PC-3 (cell line): ENCODE measurements at regions of chr14 and their contacts with region 1.

Region 1: GRCh38 chr14:88792572-88793258 is at the start of gene EML5:
- DNase-seq: peak; percentile 81
- ATAC-seq: peak; percentile 86
- H3K4me3 ChIP-seq: peak within 1 kb of the TSS; percentile 86
- H3K27ac ChIP-seq: no peak within 1 kb of the TSS
- H3K4me1 ChIP-seq: peaks cover 8% of the 10 kb centered on the region; the same call in 1 of the 2 replicates
- H3K27me3 ChIP-seq: 0 out of 2 replicates have a peak, but pooled peaks cover 4% of the 10 kb centered on the region
- CTCF ChIP-seq: no peak
- total RNA-seq, gene EML5: 0.66 and 0.86 TPM in 2 replicates

Region 2: GRCh38 chr14:88698661-88699060 is 94.1 kb before region 1 on chr14:
- CTCF ChIA-PET with region 1: no interaction called
- POLR2A ChIA-PET with region 1: interaction called, 27 read pairs
- intact Hi-C with region 1: no loop called
- DNase-seq: peak; percentile 94
- ATAC-seq: peak; percentile 94
- H3K4me3 ChIP-seq: no peak overlapping the region
- H3K27ac ChIP-seq: peak overlapping the region; percentile 77
- H3K4me1 ChIP-seq: peaks cover 38% of the 10 kb centered on the region
- H3K27me3 ChIP-seq: no peaks in the 10 kb centered on the region
- CTCF ChIP-seq: no peak

Region 3: DNA sequence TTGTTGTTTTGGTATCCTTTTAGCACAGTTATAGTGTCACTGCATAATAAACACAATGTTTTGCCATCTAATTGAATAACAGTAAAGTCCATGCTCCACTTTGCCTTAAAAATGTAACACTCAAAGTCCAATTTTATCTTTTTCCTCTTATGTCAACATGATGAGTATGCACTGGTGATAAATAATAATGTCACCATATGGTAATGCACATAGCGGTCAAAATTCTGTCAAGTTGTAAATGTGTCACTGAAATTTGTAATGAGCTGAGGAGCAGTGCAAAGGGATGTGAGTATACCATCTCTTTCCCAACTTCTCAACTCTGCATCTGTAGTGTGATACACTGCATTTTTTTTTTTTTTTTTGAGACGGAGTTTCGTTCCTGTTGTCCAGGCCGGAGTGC is 65.7 kb before region 1 on chr14:
- CTCF ChIA-PET with region 1: no interaction called
- POLR2A ChIA-PET with region 1: no interaction called
- intact Hi-C with region 1: no loop called
- DNase-seq: peak; percentile 28
- ATAC-seq: no peak
- H3K4me3 ChIP-seq: no peak overlapping the region
- H3K27ac ChIP-seq: no peak overlapping the region
- H3K4me1 ChIP-seq: no peaks in the 10 kb centered on the region
- H3K27me3 ChIP-seq: no peaks in the 10 kb centered on the region
- CTCF ChIP-seq: no peak